ENCODE measurements at regions of chr11 and their contacts with region 1.

Region 1: GRCh38 chr11:122505304-122506006 is 150.1 kb upstream of the UBASH3B start:
- DNase-seq: peak in 1 of 2 donors; percentile 96
- H3K4me3 ChIP-seq: no peak overlapping the region
- H3K27ac ChIP-seq: peak overlapping the region; percentile 56
- H3K4me1 ChIP-seq: no peaks in the 10 kb centered on the region
- H3K27me3 ChIP-seq: no peaks in the 10 kb centered on the region
- CTCF ChIP-seq: peak; percentile 67 to 92 (median 91)
- POLR2A ChIP-seq: no peak

Region 2: GRCh38 chr11:121961321-121961801 is 544.1 kb before region 1 on chr11:
- intact Hi-C with region 1: no loop called
- DNase-seq: no peak
- H3K4me3 ChIP-seq: no peak overlapping the region
- H3K27ac ChIP-seq: no peak overlapping the region
- H3K4me1 ChIP-seq: no peaks in the 10 kb centered on the region
- H3K27me3 ChIP-seq: no peaks in the 10 kb centered on the region
- CTCF ChIP-seq: no peak
- POLR2A ChIP-seq: no peak

Region 3: DNA sequence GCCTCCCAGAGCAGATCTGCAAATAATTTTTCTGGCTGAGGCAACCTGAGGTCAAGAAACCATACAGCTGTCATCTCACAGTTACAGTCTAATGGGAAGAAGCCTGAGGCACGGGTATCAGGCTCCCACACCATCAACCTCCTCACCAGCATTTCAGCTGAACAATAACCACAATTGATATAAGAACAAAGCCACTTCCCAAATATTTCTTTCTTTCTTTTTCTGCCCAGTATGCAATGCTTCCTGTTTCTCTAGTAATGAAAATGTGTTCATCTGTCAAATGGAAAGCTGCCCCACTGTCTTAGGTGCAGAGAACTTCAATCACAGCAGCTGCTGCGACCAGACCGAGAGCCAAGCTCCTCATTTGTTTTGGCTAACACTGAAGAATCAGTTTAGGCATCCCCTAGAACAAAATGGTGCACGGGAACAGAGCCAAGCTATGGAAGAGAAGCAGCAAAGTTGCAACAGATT is 497.8 kb before region 1 on chr11:
- intact Hi-C with region 1: no loop called
- DNase-seq: no peak
- H3K4me3 ChIP-seq: no peak overlapping the region
- H3K27ac ChIP-seq: no peak overlapping the region
- H3K4me1 ChIP-seq: no peaks in the 10 kb centered on the region
- H3K27me3 ChIP-seq: no peaks in the 10 kb centered on the region
- CTCF ChIP-seq: no peak
- POLR2A ChIP-seq: no peak

Region 4: DNA sequence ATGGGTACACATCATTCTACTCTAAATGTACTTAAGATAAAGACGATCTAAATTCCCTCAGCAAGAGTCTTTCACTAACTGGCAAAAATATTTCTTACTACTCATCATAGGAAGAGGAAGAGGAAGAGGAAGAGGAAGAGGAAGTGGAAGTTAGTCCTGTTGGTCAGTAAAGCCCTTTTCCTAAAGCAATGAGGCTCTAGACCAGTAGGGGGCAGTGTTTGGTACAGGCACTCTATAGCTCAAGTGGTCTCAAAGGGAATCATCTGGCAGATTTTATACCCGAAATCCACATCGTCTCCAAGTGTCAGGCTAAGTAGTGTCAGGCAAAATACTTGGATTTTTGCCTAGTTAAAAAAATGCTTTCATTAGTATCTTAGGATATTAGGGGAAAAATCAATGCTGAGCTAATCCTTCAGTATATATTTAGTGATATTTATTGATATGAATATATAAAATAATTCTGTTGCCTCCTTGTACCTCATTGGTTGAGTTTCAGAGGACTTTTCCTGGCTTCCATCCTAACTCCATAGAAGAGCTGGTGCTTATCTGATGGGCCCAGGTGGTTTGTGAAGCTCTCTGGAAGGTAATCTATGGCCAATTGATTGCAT is 397.2 kb before region 1 on chr11:
- intact Hi-C with region 1: loop called (anchors 10 kb)
- DNase-seq: no peak
- H3K4me3 ChIP-seq: no peak overlapping the region
- H3K27ac ChIP-seq: no peak overlapping the region
- H3K4me1 ChIP-seq: peaks cover 4% of the 10 kb centered on the region
- H3K27me3 ChIP-seq: no peaks in the 10 kb centered on the region
- CTCF ChIP-seq: peak in 1 of 3 experiments; percentile 18
- POLR2A ChIP-seq: no peak

Region 5: GRCh38 chr11:122215244-122215992 is 290.0 kb before region 1 on chr11:
- intact Hi-C with region 1: loop called (anchors 5 kb)
- DNase-seq: no peak
- H3K4me3 ChIP-seq: no peak overlapping the region
- H3K27ac ChIP-seq: peak overlapping the region; percentile 2
- H3K4me1 ChIP-seq: peaks cover 12% of the 10 kb centered on the region
- H3K27me3 ChIP-seq: no peaks in the 10 kb centered on the region
- CTCF ChIP-seq: peak; percentile 24 to 87 (median 64)
- POLR2A ChIP-seq: no peak

Region 6: DNA sequence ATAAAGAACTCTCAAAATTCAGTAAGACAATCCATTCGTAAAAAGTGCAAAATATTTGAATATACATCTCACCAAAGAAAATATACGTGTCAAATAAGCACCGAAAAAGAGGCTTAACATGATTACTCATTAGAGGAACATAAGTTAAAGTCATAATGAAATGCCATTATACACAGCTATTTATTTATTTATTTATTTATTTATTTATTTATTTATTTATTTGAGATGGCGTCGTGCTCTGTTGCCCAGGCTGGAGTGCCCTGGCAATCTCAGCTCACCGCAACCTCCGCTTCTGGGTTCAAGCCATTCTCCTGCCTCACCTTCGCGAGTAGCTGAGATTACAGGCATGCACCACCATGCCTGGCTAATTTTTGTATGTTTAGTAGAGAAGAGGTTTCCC is 53.5 kb before region 1 on chr11:
- intact Hi-C with region 1: no loop called
- DNase-seq: no peak
- H3K4me3 ChIP-seq: no peak overlapping the region
- H3K27ac ChIP-seq: no peak overlapping the region
- H3K4me1 ChIP-seq: no peaks in the 10 kb centered on the region
- H3K27me3 ChIP-seq: no peaks in the 10 kb centered on the region
- CTCF ChIP-seq: no peak
- POLR2A ChIP-seq: no peak

Region 7: DNA sequence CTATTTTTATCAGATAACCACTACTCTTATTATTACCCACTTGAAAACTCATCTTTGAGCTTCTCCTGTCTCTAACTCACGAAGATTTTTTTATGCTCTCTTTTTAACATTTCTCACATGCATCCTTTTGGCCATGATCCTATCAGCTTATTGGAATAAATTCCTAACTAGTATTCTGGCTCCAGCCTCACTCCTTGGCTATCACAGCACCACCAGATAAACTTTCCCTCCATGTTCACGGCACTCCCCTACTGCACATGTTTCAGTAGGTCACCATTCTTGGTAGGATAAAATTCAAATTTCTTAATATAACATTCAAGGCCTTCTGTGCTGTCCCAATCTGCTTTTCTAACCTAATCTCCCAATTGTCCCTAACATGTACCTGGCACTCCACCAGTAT is 36.5 kb before region 1 on chr11:
- intact Hi-C with region 1: no loop called
- DNase-seq: no peak
- H3K4me3 ChIP-seq: no peak overlapping the region
- H3K27ac ChIP-seq: no peak overlapping the region
- H3K4me1 ChIP-seq: no peaks in the 10 kb centered on the region
- H3K27me3 ChIP-seq: no peaks in the 10 kb centered on the region
- CTCF ChIP-seq: no peak
- POLR2A ChIP-seq: no peak